PC-3 (cell line): ENCODE measurements at regions of chr7 and their contacts with region 1.

Region 1: GRCh38 chr7:99631295-99632109 is 14.8 kb downstream of the ZSCAN25 start:
- DNase-seq: peak; percentile 22
- ATAC-seq: peak; percentile 83
- H3K4me3 ChIP-seq: no peak overlapping the region
- H3K27ac ChIP-seq: no peak overlapping the region
- H3K4me1 ChIP-seq: no peaks in the 10 kb centered on the region
- H3K27me3 ChIP-seq: no peaks in the 10 kb centered on the region
- CTCF ChIP-seq: peak; percentile 52

Region 2: DNA sequence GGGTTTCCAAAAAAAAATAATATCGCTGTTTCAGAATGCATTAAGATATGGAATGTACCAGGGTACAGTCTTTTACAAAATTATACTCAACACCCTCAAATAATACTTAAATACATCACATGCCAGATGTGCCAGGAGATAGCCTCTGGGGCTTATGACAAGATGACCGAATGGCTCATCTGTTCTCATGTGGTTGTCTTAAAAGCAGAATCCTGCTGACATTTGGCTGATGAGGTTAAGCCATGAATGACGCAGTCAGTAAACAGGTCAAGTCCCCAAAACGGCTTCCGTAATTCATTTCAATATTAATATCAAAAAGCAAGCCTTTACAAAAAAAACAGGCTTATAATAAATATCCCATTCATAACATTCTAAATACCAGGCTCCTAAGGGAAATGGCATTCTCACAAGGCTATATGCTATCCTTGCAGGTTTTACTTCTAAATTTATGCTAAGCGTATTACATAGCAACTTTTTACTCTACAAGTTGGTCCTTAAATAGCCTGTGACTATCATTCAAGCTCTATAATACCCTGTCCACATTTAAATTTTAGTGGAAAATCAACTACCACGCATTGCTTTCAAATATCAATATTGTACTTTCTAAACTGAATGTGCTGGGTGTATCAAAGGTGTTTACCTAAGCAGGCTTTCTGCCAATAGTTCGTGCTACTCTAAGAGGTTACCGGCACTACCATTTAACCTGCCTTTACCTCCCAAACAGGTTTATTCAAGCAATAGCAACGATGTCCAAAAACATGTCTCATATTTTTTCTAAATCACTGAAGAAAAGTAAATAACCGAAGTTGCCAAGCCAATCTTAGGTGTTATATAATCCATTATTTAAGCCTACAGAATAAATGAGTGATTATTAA is 503.2 kb before region 1 on chr7:
- CTCF ChIA-PET with region 1: no interaction called
- POLR2A ChIA-PET with region 1: no interaction called
- intact Hi-C with region 1: no loop called
- DNase-seq: peak; percentile 66
- ATAC-seq: 0 out of 2 replicates have a peak, but pooled peaks have one; percentile 3
- H3K4me3 ChIP-seq: peak overlapping the region; percentile 8; the same call in 1 of the 2 replicates
- H3K27ac ChIP-seq: peak overlapping the region; percentile 8
- H3K4me1 ChIP-seq: peaks cover 59% of the 10 kb centered on the region
- H3K27me3 ChIP-seq: no peaks in the 10 kb centered on the region
- CTCF ChIP-seq: no peak

Region 3: GRCh38 chr7:99837649-99838361 is 206.3 kb after region 1 on chr7:
- CTCF ChIA-PET with region 1: interaction called, 10 read pairs
- POLR2A ChIA-PET with region 1: no interaction called
- intact Hi-C with region 1: loop called (anchors 1 kb)
- DNase-seq: peak; percentile 32
- ATAC-seq: peak; percentile 68
- H3K4me3 ChIP-seq: no peak overlapping the region
- H3K27ac ChIP-seq: no peak overlapping the region
- H3K4me1 ChIP-seq: 0 out of 2 replicates have a peak, but pooled peaks cover 4% of the 10 kb centered on the region
- H3K27me3 ChIP-seq: peaks cover 18% of the 10 kb centered on the region; the same call in 1 of the 2 replicates
- CTCF ChIP-seq: peak; percentile 46

Region 4: GRCh38 chr7:99848420-99849216 is 217.1 kb after region 1 on chr7:
- CTCF ChIA-PET with region 1: no interaction called
- POLR2A ChIA-PET with region 1: no interaction called
- intact Hi-C with region 1: no loop called
- DNase-seq: no peak
- ATAC-seq: no peak
- H3K4me3 ChIP-seq: no peak overlapping the region
- H3K27ac ChIP-seq: no peak overlapping the region
- H3K4me1 ChIP-seq: no peaks in the 10 kb centered on the region
- H3K27me3 ChIP-seq: peaks cover 31% of the 10 kb centered on the region; the same call in 1 of the 2 replicates
- CTCF ChIP-seq: no peak

Region 5: DNA sequence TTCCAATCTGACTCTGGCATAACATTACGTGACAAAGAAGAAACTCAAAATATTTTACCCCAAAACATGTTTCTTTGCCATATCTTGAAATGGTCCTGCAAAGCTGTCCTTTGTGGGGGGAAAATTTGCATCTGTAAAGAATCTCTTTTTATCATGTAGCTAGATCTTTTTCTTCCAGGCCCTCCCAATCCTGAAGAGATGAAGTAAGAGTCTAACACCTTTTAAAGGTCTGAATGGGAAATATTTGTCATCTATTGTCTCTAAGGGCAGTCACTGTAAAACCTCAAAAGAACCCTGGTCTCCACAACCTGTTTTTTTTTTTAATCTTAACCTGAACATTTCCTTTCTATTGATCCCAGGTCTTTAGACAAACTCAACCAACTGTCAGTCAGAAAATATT is 236.7 kb after region 1 on chr7:
- CTCF ChIA-PET with region 1: no interaction called
- POLR2A ChIA-PET with region 1: no interaction called
- intact Hi-C with region 1: no loop called
- DNase-seq: no peak
- ATAC-seq: no peak
- H3K4me3 ChIP-seq: no peak overlapping the region
- H3K27ac ChIP-seq: no peak overlapping the region
- H3K4me1 ChIP-seq: no peaks in the 10 kb centered on the region
- H3K27me3 ChIP-seq: no peaks in the 10 kb centered on the region
- CTCF ChIP-seq: no peak